Breast epithelium (tissue), 4 donors: ENCODE measurements at regions of chr1 and their contacts with region 1.

Region 1: GRCh38 chr1:111755331-111756123 is at the start of gene DDX20:
- DNase-seq: peak; percentile 88 to 92
- H3K4me3 ChIP-seq: peak within 1 kb of the TSS; percentile 59 to 85 (median 83)
- H3K27ac ChIP-seq: peak within 1 kb of the TSS; percentile 94 to 96
- H3K4me1 ChIP-seq: peaks cover 0 to 11% of the 10 kb centered on the region in 2 donors
- H3K27me3 ChIP-seq: no peaks in the 10 kb centered on the region
- CTCF ChIP-seq: peak; percentile 86 to 95 (median 89)
- POLR2A ChIP-seq: no peak
- total RNA-seq, gene DDX20: 14.1 to 28.0 (median 25.9) TPM

Region 2: DNA sequence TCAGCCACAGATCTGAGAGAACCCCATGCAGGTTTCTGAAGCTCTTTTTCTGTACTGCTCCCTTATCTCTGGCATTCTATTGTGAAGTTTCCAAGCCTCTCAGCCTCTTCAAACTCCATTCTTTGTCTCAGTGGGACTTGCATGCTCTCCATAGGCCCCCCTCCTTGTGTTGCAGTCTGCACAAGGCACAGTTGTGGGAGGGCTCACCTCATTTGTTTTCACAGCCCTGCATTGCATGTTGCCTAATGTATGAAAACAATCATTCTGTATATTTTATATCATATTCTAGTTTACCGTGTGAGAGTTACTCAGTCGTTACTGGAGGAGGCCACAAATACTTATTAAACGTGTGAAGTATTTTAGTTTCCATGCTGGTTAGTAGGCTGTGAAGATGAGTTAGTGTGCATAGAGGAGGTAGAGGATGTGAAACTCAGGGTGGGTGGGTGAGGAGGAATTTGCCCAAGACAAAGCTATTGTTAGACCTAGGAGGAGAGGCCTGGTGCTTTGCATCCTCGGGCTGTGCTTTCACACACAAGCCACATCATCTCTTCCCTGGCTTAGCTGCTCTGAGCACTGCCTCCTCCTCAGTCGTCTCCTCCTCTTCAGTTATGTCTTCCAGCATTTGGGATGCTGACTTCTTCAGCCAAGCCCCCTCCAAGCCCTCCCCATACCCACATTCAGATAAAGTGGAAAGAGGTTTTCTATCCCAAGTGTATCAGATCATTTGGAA is 535.8 kb before region 1 on chr1:
- intact Hi-C with region 1: loop called (anchors 5 kb)
- DNase-seq: no peak
- H3K4me3 ChIP-seq: no peak overlapping the region
- H3K27ac ChIP-seq: no peak overlapping the region
- H3K4me1 ChIP-seq: no peaks in the 10 kb centered on the region
- H3K27me3 ChIP-seq: no peaks in the 10 kb centered on the region
- CTCF ChIP-seq: no peak
- POLR2A ChIP-seq: no peak

Region 3: GRCh38 chr1:111516005-111516535 is 239.5 kb before region 1 on chr1:
- intact Hi-C with region 1: loop called (anchors 5 kb)
- DNase-seq: no peak
- H3K4me3 ChIP-seq: peak overlapping the region; percentile 33 to 63 (median 37)
- H3K27ac ChIP-seq: peak overlapping the region; percentile 20 to 80
- H3K4me1 ChIP-seq: peaks cover 0 to 6% of the 10 kb centered on the region in 2 donors
- H3K27me3 ChIP-seq: no peaks in the 10 kb centered on the region
- CTCF ChIP-seq: peak in 1 of 3 donors; percentile 9
- POLR2A ChIP-seq: no peak

Region 4: GRCh38 chr1:111639602-111640198 is 115.8 kb before region 1 on chr1:
- intact Hi-C with region 1: no loop called
- DNase-seq: no peak
- H3K4me3 ChIP-seq: no peak overlapping the region
- H3K27ac ChIP-seq: no peak overlapping the region
- H3K4me1 ChIP-seq: no peaks in the 10 kb centered on the region
- H3K27me3 ChIP-seq: no peaks in the 10 kb centered on the region
- CTCF ChIP-seq: no peak
- POLR2A ChIP-seq: no peak

Region 5: DNA sequence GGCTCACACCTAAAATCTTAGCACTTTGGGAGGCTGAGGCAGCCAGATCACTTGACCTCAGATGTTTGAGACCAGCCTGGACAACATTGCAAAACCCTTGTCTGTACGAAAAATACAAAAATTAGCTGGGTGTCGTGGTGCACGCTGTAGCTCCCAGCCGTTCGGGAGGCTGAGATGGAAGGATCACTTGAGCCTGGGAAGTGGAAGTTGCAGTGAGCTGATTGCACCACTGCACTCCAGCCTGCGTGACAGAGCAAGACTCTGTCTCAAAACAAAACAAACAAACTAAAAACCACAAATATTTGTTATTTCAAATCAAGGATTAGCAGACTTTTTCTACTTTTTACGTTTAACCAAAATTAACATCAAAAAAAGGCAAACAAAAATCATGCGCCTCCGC is 47.6 kb before region 1 on chr1:
- intact Hi-C with region 1: loop called (anchors 2 kb)
- DNase-seq: no peak
- H3K4me3 ChIP-seq: no peak overlapping the region
- H3K27ac ChIP-seq: no peak overlapping the region
- H3K4me1 ChIP-seq: no peaks in the 10 kb centered on the region
- H3K27me3 ChIP-seq: no peaks in the 10 kb centered on the region
- CTCF ChIP-seq: no peak
- POLR2A ChIP-seq: no peak